ENCODE measurements at regions of chr9 and their contacts with region 1.

Region 1: DNA sequence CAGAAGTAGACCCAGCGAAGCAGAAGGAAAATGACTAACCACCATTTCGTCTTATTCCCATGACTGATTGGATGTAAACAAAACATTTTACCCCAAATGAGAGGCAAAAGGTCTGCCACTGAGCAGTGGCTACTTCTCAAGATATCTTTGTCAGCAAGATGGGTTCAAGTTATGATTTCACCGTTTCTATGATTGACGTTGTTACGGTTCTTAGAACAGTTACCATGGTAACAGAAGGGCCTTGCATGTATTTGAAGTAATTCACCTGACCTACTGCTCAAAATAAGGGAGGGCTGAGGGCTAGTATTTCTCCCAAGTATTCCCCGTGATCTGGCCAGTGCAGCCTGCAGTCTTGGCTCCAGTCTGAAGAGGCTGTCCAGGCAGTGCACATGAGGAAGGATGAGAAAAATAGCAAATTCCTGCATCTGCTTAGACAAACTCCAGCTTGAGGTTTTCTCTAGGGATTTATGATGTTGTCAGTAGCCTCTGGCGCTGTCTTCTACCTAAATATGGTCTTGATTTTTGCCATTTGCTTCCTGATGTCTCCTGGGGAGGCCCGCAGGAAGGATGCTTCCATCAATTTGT is 372.7 kb downstream of the TMEM38B start:
- DNase-seq: no peak
- ATAC-seq: no peak
- H3K4me3 ChIP-seq: no peak overlapping the region
- H3K27ac ChIP-seq: no peak overlapping the region
- H3K4me1 ChIP-seq: peaks cover 0 to 14% (median 0%) of the 10 kb centered on the region in 9 donors
- H3K27me3 ChIP-seq: no peaks in the 10 kb centered on the region
- CTCF ChIP-seq: no peak

Region 2: GRCh38 chr9:105994970-105995369 is 72.1 kb before region 1 on chr9:
- intact Hi-C with region 1: loop called in 1 of 10 experiments (anchors 10 kb)
- DNase-seq: no peak
- ATAC-seq: no peak
- H3K4me3 ChIP-seq: no peak overlapping the region
- H3K27ac ChIP-seq: no peak overlapping the region
- H3K4me1 ChIP-seq: no peaks in the 10 kb centered on the region
- H3K27me3 ChIP-seq: no peaks in the 10 kb centered on the region
- CTCF ChIP-seq: no peak